ENCODE measurements at regions of chr1 and their contacts with region 1.

Region 1: DNA sequence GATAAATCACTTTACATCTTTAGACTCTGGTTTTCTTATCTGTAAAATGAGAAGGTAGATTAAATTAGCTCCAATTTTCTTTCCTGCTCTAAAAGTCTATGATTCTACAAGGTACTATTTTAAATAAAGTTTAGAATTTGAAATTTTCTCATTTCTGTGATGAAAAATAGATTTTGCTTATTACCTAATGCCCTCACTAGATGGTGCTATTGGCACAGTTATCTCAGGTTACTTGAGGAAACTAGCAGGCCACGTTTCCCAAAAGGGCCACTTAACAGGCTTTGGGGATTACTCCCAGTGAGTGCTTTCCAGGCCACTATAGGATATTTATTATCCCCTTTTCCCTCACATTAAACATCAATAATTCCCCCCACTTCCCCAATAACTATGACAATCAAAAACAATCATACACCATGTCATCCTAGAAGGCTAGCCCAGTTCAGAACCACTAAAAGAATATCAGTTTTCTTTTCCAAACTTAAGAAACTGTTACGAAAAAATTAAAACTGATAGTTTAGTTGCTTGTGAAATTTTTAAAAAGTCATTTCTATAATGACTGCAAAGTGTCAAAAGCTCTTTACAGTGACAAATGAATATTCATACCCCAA is 30.6 kb downstream of the OMA1 start:
- DNase-seq: peak in 5 of 9 experiments; percentile 16 to 82 (median 27)
- ATAC-seq: peak; percentile 42
- H3K4me3 ChIP-seq: no peak overlapping the region
- H3K4me3 Mint-ChIP-seq: no peak overlapping the region
- H3K27ac ChIP-seq: no peak overlapping the region
- H3K27ac Mint-ChIP-seq: peak overlapping the region; percentile 71
- H3K4me1 ChIP-seq: no peaks in the 10 kb centered on the region
- H3K4me1 Mint-ChIP-seq: peaks cover 8% of the 10 kb centered on the region
- H3K27me3 ChIP-seq: no peaks in the 10 kb centered on the region
- H3K27me3 Mint-ChIP-seq: no peaks in the 10 kb centered on the region
- CTCF ChIP-seq: peak; percentile 72

Region 2: DNA sequence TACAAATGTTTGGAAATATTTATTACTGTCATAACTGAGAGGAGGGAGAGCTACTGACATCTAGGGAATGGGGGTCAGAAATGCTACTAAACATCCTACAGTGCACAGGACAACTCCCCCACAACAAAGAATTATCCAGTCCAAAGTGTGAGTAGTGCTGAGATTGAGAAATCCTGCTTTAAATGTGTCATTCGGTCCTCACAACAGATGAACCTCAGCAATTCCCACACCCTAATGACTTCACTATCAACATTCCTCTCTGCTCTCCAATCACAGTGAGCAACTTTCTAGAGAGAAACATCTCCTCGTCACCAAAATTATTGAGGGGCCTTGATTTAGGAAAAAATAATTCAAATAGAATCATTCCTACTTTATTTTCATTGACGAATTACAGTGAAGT is 12.6 kb after region 1 on chr1:
- CTCF ChIA-PET with region 1: interaction called, 35 read pairs
- POLR2A ChIA-PET with region 1: no interaction called
- intact Hi-C with region 1: no loop called
- DNase-seq: no peak
- ATAC-seq: no peak
- H3K4me3 ChIP-seq: no peak overlapping the region
- H3K4me3 Mint-ChIP-seq: no peak overlapping the region
- H3K27ac ChIP-seq: no peak overlapping the region
- H3K27ac Mint-ChIP-seq: no peak overlapping the region
- H3K4me1 ChIP-seq: no peaks in the 10 kb centered on the region
- H3K4me1 Mint-ChIP-seq: peaks cover 4% of the 10 kb centered on the region
- H3K27me3 ChIP-seq: no peaks in the 10 kb centered on the region
- H3K27me3 Mint-ChIP-seq: no peaks in the 10 kb centered on the region
- CTCF ChIP-seq: no peak

Region 3: DNA sequence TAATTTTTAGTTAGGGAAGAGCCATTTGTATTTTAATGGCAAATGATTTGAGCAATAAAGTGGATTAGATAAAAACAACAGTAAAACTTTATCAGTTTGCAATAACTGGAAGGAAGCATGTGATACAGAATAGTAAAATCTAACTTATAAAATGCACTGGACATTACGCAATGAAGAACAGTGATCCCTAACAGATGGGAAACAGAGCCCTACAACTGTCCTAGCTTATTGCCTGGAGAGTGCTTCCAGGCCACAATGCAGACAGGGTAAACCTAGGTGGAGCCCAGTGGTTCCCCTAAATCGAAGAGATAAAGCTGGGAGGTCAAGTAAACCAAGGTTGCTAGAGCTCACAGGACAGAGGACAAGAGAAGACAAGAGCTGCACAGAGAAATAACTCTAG is 23.7 kb after region 1 on chr1:
- CTCF ChIA-PET with region 1: interaction called, 85 read pairs
- POLR2A ChIA-PET with region 1: interaction called, 3 read pairs
- intact Hi-C with region 1: loop called in 1 of 2 experiments (anchors 1 kb)
- DNase-seq: no peak
- ATAC-seq: no peak
- H3K4me3 ChIP-seq: no peak overlapping the region
- H3K4me3 Mint-ChIP-seq: no peak overlapping the region
- H3K27ac ChIP-seq: no peak overlapping the region
- H3K27ac Mint-ChIP-seq: no peak overlapping the region
- H3K4me1 ChIP-seq: peaks cover under 1% of the 10 kb centered on the region
- H3K4me1 Mint-ChIP-seq: peaks cover 22% of the 10 kb centered on the region
- H3K27me3 ChIP-seq: no peaks in the 10 kb centered on the region
- H3K27me3 Mint-ChIP-seq: no peaks in the 10 kb centered on the region
- CTCF ChIP-seq: no peak

Region 4: DNA sequence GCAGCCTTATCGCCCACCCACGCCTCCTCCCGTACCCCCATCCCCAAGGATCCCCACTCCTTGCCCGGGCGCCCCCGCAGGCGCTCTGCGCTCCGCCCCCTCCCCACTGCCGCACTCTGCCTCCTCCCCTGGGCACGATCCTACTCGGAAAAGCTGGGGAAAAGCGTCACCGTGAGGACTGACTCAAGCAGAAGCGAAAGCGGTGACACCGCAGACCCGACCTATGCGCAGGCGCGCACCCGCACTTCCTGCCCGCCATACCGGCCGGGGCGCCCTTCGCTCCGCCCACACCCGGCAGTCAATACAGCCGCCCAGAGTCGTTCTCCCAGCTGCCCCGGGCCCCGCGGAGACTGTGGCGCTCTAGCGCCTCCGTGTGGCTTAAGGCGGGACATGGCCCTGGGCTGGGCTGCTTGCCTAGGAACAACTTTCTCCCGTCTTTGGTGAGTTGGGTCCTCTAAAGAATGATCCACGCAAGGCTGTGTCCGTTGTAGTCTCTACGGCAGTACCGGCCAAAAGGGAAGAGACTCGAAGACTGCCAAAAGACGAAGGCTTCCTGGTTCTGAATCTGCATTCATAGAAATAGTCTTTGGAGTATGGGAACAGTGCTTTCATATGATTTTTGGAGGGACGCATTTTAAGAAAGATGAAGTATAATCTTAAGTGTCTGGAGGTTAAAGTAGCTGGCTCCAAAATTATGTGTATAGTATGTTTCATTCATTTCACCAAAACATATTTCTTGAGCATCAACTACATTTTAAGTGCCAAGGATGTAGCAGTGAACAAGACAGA is 30.8 kb after region 1 on chr1 and contains the start of gene OMA1:
- CTCF ChIA-PET with region 1: interaction called, 85 read pairs
- POLR2A ChIA-PET with region 1: interaction called, 23 read pairs
- intact Hi-C with region 1: loop called (anchors 1 kb)
- DNase-seq: peak; percentile 95 to 99 (median 98)
- ATAC-seq: peak; percentile 92
- H3K4me3 ChIP-seq: peak within 1 kb of the TSS; percentile 63 to 77
- H3K4me3 Mint-ChIP-seq: peak within 1 kb of the TSS; percentile 97
- H3K27ac ChIP-seq: peak within 1 kb of the TSS; percentile 95 to 97
- H3K27ac Mint-ChIP-seq: peak within 1 kb of the TSS; percentile 99
- H3K4me1 ChIP-seq: peaks cover 12% of the 10 kb centered on the region
- H3K4me1 Mint-ChIP-seq: peaks cover 32% of the 10 kb centered on the region
- H3K27me3 ChIP-seq: no peaks in the 10 kb centered on the region
- H3K27me3 Mint-ChIP-seq: no peaks in the 10 kb centered on the region
- CTCF ChIP-seq: peak; percentile 97
- total RNA-seq, gene OMA1: 25.1 to 31.2 TPM

Region 5: GRCh38 chr1:58652651-58653184 is 136.8 kb after region 1 on chr1:
- CTCF ChIA-PET with region 1: interaction called, 68 read pairs
- POLR2A ChIA-PET with region 1: no interaction called
- intact Hi-C with region 1: loop called (anchors 1 kb)
- DNase-seq: peak; percentile 11 to 83 (median 53)
- ATAC-seq: peak; percentile 90
- H3K4me3 ChIP-seq: no peak overlapping the region
- H3K4me3 Mint-ChIP-seq: no peak overlapping the region
- H3K27ac ChIP-seq: no peak overlapping the region
- H3K27ac Mint-ChIP-seq: no peak overlapping the region
- H3K4me1 ChIP-seq: peaks cover 14% of the 10 kb centered on the region
- H3K4me1 Mint-ChIP-seq: peaks cover 23% of the 10 kb centered on the region
- H3K27me3 ChIP-seq: no peaks in the 10 kb centered on the region
- H3K27me3 Mint-ChIP-seq: no peaks in the 10 kb centered on the region
- CTCF ChIP-seq: peak; percentile 84

Region 6: GRCh38 chr1:58699011-58699762 is 183.3 kb after region 1 on chr1:
- CTCF ChIA-PET with region 1: no interaction called
- POLR2A ChIA-PET with region 1: no interaction called
- intact Hi-C with region 1: no loop called
- DNase-seq: peak in 1 of 9 experiments; percentile 51
- ATAC-seq: no peak
- H3K4me3 ChIP-seq: peak overlapping the region; percentile 86 to 100
- H3K4me3 Mint-ChIP-seq: peak overlapping the region; percentile 99
- H3K27ac ChIP-seq: peak overlapping the region; percentile 84 to 93
- H3K27ac Mint-ChIP-seq: peak overlapping the region; percentile 98
- H3K4me1 ChIP-seq: peaks cover 28% of the 10 kb centered on the region
- H3K4me1 Mint-ChIP-seq: peaks cover 25% of the 10 kb centered on the region
- H3K27me3 ChIP-seq: no peaks in the 10 kb centered on the region
- H3K27me3 Mint-ChIP-seq: no peaks in the 10 kb centered on the region
- CTCF ChIP-seq: no peak